Activated CD8-positive, alpha-beta T cell treated with anti-CD3 and anti-CD28 coated beads, Interleukin-2, amount 10 ng/mL, durations not matched to agents 7 days and 5 days (primary cell): ENCODE measurements at regions of chr6 and their contacts with region 1.

Region 1: DNA sequence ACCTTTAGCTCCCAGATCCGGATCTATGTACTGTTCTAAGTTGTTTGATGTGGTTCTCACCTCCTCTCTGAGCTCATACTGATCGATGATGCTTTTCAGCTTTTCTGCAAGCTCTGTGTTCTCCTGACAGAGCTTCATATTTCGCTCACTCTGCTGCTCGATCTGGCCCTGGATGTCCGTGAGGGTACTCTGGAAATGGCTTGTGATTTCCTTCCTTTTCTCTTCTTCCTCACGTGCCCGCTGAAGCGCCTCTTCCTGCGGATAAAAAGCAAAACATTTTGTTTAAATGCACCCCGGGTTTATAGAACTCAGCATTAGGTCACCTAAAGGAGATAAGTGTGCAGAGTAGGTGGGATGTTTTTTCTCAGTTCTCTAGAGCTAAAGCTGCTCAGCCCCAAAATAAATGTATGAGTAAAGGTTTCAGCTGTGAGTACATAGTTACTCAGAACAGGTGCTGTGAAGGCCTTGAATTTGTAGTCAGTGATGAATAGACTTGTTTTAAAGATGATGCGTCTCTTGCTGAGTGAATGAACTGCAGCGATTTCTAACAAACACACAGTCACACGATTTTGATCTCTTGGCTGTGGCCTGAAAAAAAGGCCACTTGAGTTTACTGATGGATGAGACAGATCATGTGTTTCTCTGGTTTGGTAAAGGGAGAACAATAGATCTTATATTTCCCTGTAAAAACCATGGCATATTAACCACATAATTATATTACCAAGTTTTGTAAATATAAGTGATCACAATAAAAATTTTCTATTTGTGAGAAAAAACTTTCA is 29.1 kb downstream of the TXLNB start:
- DNase-seq: no peak
- ATAC-seq: peak; percentile 92
- H3K4me3 Mint-ChIP-seq: peak overlapping the region; percentile 47
- H3K27ac Mint-ChIP-seq: peak overlapping the region; percentile 8
- H3K4me1 Mint-ChIP-seq: peaks cover 13% of the 10 kb centered on the region
- H3K27me3 Mint-ChIP-seq: no peaks in the 10 kb centered on the region

Region 2: GRCh38 chr6:139003751-139004150 is 259.0 kb before region 1 on chr6:
- CTCF ChIA-PET with region 1: no interaction called
- POLR2A ChIA-PET with region 1: no interaction called
- DNase-seq: no peak
- ATAC-seq: no peak
- H3K4me3 Mint-ChIP-seq: no peak overlapping the region
- H3K27ac Mint-ChIP-seq: no peak overlapping the region
- H3K4me1 Mint-ChIP-seq: peaks cover 2% of the 10 kb centered on the region
- H3K27me3 Mint-ChIP-seq: peaks cover 2% of the 10 kb centered on the region

Region 3: GRCh38 chr6:139250296-139251044 is 12.2 kb before region 1 on chr6:
- CTCF ChIA-PET with region 1: interaction called, 11 read pairs
- POLR2A ChIA-PET with region 1: no interaction called
- DNase-seq: peak; percentile 68
- ATAC-seq: peak; percentile 82
- H3K4me3 Mint-ChIP-seq: peak overlapping the region; percentile 2
- H3K27ac Mint-ChIP-seq: peak overlapping the region; percentile 85
- H3K4me1 Mint-ChIP-seq: peaks cover 30% of the 10 kb centered on the region
- H3K27me3 Mint-ChIP-seq: no peaks in the 10 kb centered on the region